Panc1 (cell line): ENCODE measurements at regions of chr20 and their contacts with region 1.

Region 1: DNA sequence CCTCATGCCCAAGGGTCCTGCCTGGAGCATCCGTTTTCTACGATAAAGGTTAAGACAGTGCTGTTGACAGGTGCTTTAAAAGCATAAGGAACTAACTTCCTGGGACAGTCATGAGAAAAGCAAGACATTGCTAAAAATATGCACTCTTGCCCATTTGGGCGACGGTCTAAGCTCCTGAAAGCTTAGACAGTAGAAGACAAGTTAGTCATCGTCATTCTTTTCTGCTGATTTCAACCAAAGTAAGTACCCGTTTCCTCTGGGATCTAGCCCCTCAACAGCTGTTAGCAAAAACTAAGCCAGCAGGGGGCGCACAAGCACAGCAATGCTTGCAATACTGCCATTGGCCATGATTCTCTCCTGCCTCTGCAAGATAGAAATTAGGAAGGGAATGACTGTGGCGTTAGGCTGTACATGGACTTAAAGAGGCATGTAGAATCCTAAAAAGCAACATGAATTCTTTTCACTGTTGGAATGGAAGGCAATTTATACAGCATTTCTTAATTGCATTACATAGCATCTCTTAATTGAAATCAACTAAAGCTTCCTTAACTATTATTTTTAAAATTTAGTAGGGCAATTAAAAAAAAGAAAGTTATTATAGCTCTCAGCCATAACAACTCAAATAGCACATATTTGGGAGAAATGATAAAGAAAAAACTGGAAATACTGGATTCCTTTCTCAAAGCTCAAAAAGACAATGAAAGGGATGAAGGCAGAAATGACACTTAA is 147.8 kb upstream of the RALGAPA2 start:
- DNase-seq: peak; percentile 54
- ATAC-seq: peak; percentile 88
- H3K4me3 ChIP-seq: no peak overlapping the region
- H3K27ac ChIP-seq: no peak overlapping the region
- H3K4me1 ChIP-seq: no peaks in the 10 kb centered on the region
- H3K27me3 ChIP-seq: no peaks in the 10 kb centered on the region
- CTCF ChIP-seq: peak; percentile 94

Region 2: GRCh38 chr20:21615617-21616080 is 755.4 kb after region 1 on chr20:
- CTCF ChIA-PET with region 1: interaction called, 3 read pairs
- POLR2A ChIA-PET with region 1: no interaction called
- in situ Hi-C with region 1: no loop called
- intact Hi-C with region 1: loop called (anchors 10 kb)
- DNase-seq: peak; percentile 42
- ATAC-seq: peak; percentile 97
- H3K4me3 ChIP-seq: no peak overlapping the region
- H3K27ac ChIP-seq: no peak overlapping the region
- H3K4me1 ChIP-seq: no peaks in the 10 kb centered on the region
- H3K27me3 ChIP-seq: no peaks in the 10 kb centered on the region; the same call in none of the 2 replicates
- CTCF ChIP-seq: peak; percentile 91